ENCODE measurements at regions of chr2 and their contacts with region 1.

Region 1: GRCh38 chr2:202577250-202578183 is 57.3 kb upstream of the FAM117B start:
- DNase-seq: no peak
- ATAC-seq: no peak
- H3K4me3 ChIP-seq: no peak overlapping the region
- H3K27ac ChIP-seq: no peak overlapping the region
- H3K4me1 ChIP-seq: no peaks in the 10 kb centered on the region
- H3K27me3 ChIP-seq: no peaks in the 10 kb centered on the region
- CTCF ChIP-seq: no peak
- POLR2A ChIP-seq: no peak
- RAD21 ChIP-seq: no peak

Region 2: DNA sequence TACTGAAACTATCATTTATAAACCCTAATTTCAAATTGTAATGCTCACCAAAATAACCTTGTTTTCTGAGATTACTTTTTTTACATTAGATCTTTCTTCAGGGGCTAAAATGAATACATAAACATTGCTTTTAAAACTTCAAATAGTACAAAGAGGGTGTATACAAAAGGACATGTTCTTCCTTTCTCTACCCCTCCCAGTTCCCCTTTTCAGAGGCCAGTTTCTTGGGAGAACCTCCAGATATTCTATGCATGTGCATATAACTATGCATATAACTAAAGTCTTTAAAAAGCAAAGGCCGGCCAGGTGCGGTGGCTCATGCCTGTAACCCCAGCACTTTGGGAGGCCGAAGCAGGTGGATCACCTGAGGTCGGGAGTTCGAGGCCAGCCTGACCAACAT is 46.6 kb after region 1 on chr2:
- CTCF ChIA-PET with region 1: no interaction called
- POLR2A ChIA-PET with region 1: no interaction called
- dilution Hi-C with region 1: no loop called
- in situ Hi-C with region 1: no loop called
- intact Hi-C with region 1: no loop called
- DNase-seq: no peak
- ATAC-seq: no peak
- H3K4me3 ChIP-seq: no peak overlapping the region
- H3K27ac ChIP-seq: no peak overlapping the region
- H3K4me1 ChIP-seq: peaks cover 3% of the 10 kb centered on the region; the same call in 1 of the 2 replicates
- H3K27me3 ChIP-seq: no peaks in the 10 kb centered on the region
- CTCF ChIP-seq: no peak
- POLR2A ChIP-seq: no peak
- RAD21 ChIP-seq: no peak

Region 3: GRCh38 chr2:203035879-203036470 is 458.5 kb after region 1 on chr2:
- CTCF ChIA-PET with region 1: no interaction called
- POLR2A ChIA-PET with region 1: no interaction called
- dilution Hi-C with region 1: no loop called
- in situ Hi-C with region 1: no loop called
- intact Hi-C with region 1: loop called (anchors 10 kb)
- DNase-seq: no peak
- ATAC-seq: no peak
- H3K4me3 ChIP-seq: no peak overlapping the region
- H3K27ac ChIP-seq: no peak overlapping the region
- H3K4me1 ChIP-seq: no peaks in the 10 kb centered on the region
- H3K27me3 ChIP-seq: no peaks in the 10 kb centered on the region
- CTCF ChIP-seq: no peak
- POLR2A ChIP-seq: no peak
- RAD21 ChIP-seq: no peak

Region 4: DNA sequence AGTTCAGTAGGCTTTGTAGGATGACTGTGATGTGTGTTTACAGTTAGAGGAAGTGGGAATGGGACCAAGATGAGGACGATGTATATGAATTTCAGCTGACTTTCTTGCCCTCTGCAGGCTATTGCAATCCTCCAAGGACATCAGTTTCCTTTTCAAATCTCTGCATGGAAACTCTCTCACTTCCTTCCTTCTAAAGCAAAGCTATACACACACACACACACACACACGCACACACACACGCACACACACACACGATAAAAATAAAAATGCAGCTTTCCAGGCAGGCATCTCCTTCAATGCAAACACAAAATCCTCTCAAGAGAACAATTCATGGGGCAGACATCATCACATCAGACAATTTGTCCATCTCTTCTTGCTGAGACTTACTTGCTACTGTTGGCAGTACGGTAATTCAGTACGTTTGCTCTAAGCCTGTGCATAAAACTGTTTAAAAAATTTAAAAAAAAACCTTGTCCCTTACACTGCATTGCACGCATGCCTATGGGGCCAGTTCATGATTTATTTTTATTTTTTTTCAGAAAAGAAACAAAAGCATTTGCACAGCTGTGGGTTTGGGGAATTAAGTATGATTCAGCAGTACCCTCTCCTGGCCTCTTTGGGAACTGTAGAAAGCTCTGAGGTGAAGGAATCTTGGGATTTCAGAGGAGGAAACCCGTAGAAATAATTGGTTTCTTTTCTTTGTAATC is 1331.9 kb after region 1 on chr2:
- CTCF ChIA-PET with region 1: no interaction called
- POLR2A ChIA-PET with region 1: no interaction called
- dilution Hi-C with region 1: no loop called
- in situ Hi-C with region 1: loop called (anchors 25 kb)
- intact Hi-C with region 1: loop called (anchors 1 kb)
- DNase-seq: peak; percentile 80
- ATAC-seq: peak; percentile 94
- H3K4me3 ChIP-seq: peak overlapping the region; percentile 20; the same call in 1 of the 2 replicates
- H3K27ac ChIP-seq: peak overlapping the region; percentile 57; the same call in 1 of the 2 replicates
- H3K4me1 ChIP-seq: peaks cover 3% of the 10 kb centered on the region; the same call in 1 of the 2 replicates
- H3K27me3 ChIP-seq: no peaks in the 10 kb centered on the region; the same call in 1 of the 2 replicates
- CTCF ChIP-seq: peak; percentile 85
- POLR2A ChIP-seq: no peak
- RAD21 ChIP-seq: peak; percentile 85